ENCODE measurements at regions of chr5 and their contacts with region 1.

Region 1: GRCh38 chr5:150458819-150459557 is 9.4 kb upstream of the RPS14 start:
- DNase-seq: peak; percentile 90
- ATAC-seq: peak; percentile 94
- H3K4me3 Mint-ChIP-seq: peak overlapping the region; percentile 58
- H3K27ac Mint-ChIP-seq: peak overlapping the region; percentile 50
- H3K4me1 Mint-ChIP-seq: peaks cover 44% of the 10 kb centered on the region
- H3K27me3 Mint-ChIP-seq: no peaks in the 10 kb centered on the region
- CTCF ChIP-seq: no peak

Region 2: DNA sequence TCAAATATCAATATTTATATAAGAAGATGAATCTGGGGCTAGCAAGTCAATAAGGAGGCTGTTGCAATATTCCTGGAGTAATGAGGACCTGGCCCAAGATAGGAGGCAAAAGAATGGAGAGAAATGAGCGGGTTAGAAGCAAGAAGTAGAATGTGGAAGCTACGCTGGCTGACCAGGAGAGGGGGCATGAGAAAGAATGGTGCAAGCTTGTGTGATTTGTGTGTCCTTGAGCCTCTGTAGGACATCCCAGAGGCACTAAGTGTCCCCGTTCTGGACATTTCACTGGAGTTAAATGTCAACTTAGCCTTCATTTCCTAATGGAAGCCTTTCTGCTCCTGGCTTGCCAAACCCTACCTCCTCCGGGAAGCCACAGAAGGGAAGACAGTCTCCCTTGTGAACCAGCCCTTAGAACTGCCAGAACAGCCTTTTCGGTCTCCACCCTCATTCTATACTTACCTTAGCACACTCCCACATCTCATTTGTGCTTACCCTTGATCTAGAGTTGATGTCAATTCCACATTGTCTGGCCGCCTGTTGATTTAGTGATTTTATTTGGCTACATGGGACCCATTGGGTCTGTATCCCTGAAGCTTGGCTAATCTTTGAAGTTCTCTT is 507.7 kb before region 1 on chr5:
- CTCF ChIA-PET with region 1: no interaction called
- POLR2A ChIA-PET with region 1: no interaction called
- intact Hi-C with region 1: no loop called
- DNase-seq: no peak
- ATAC-seq: no peak
- H3K4me3 Mint-ChIP-seq: no peak overlapping the region
- H3K27ac Mint-ChIP-seq: no peak overlapping the region
- H3K4me1 Mint-ChIP-seq: no peaks in the 10 kb centered on the region
- H3K27me3 Mint-ChIP-seq: peaks cover 7% of the 10 kb centered on the region
- CTCF ChIP-seq: no peak

Region 3: GRCh38 chr5:150498501-150498900 is 39.5 kb after region 1 on chr5:
- CTCF ChIA-PET with region 1: no interaction called
- POLR2A ChIA-PET with region 1: no interaction called
- intact Hi-C with region 1: no loop called
- DNase-seq: no peak
- ATAC-seq: no peak
- H3K4me3 Mint-ChIP-seq: no peak overlapping the region
- H3K27ac Mint-ChIP-seq: no peak overlapping the region
- H3K4me1 Mint-ChIP-seq: peaks cover 14% of the 10 kb centered on the region
- H3K27me3 Mint-ChIP-seq: no peaks in the 10 kb centered on the region
- CTCF ChIP-seq: no peak

Region 4: DNA sequence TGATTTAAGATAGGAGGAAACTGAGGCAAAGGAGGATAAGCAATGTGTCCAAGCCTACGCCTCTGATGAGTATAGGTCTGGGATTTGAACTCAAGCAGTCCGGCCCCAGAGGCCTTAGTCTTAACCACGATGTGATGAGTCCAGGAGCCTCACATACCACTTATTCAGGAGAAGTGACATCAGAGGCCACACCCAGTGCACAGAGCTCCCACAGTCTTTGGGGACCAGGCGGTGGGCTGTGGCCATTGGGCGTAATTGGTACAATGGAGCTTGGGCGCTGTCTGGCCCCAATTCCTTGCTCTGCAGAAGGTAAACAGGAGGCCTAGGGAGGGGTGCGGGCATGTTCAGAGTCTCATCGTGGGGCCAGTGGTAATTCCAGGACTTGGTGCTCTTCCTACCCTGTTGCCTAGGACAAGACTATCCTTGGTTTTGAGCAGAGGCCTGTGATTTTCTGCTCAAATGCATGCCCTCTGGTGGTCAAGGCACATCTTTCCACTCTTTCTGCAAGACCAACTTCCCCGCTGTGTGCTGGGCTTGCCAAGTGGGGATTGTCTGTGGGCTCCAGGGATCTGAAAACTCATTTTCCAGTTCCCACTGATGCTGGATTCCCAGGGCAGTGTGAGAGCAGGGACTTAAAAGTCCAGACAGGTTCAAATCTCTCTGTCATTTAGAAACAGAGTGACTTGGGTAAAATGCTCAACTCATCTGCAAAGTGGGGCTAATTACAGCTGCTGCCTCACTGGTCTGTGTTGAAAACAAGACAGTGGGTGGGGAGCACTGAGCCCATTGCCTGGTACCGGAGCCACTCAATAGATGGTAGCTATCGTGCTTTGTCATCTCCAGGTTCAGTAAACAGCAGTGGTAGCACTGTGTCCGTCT is 64.7 kb after region 1 on chr5:
- CTCF ChIA-PET with region 1: interaction called, 51 read pairs
- POLR2A ChIA-PET with region 1: no interaction called
- intact Hi-C with region 1: loop called (anchors 1 kb)
- DNase-seq: no peak
- ATAC-seq: peak; percentile 65
- H3K4me3 Mint-ChIP-seq: no peak overlapping the region
- H3K27ac Mint-ChIP-seq: no peak overlapping the region
- H3K4me1 Mint-ChIP-seq: no peaks in the 10 kb centered on the region
- H3K27me3 Mint-ChIP-seq: no peaks in the 10 kb centered on the region
- CTCF ChIP-seq: no peak

Region 5: DNA sequence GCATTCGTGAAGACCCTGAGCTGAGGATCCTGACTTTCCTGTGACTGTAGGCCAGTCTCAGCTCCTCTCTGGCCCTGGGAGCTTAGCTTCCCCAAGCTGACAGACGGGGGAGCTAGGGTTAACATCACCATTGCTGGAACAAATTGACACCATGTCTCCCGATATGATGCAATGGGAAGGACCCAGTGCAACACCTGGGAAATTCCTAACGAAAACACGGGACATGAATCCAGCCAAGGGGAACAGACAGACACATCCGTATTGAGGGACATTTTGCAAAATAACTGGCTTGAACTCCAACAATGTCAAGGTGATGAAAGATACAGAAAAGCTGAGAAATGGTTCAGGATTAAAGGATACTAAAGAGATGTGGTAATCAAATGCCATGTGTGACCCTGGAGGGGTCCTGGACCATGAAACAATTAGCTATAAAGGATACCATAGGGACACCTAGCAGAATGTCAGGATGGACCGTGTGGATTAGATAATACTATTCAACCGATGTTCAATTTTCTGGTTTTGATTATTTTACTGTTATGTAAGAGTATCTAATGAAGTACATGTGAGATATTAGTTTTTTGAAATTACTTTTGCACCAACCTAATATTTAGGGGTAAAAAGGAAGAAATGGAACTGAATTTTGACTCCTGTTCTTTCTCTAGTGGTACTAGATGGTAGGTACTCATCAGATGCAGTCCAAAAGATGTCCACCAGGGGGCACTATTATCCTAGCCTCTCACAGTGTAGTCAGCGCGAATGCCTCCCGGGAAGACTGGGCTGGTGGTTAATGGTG is 101.6 kb after region 1 on chr5:
- CTCF ChIA-PET with region 1: interaction called, 14 read pairs
- POLR2A ChIA-PET with region 1: no interaction called
- intact Hi-C with region 1: loop called (anchors 1 kb)
- DNase-seq: peak; percentile 36
- ATAC-seq: peak; percentile 98
- H3K4me3 Mint-ChIP-seq: no peak overlapping the region
- H3K27ac Mint-ChIP-seq: no peak overlapping the region
- H3K4me1 Mint-ChIP-seq: peaks cover 7% of the 10 kb centered on the region
- H3K27me3 Mint-ChIP-seq: no peaks in the 10 kb centered on the region
- CTCF ChIP-seq: peak; percentile 44

Region 6: GRCh38 chr5:150710165-150710564 is 251.2 kb after region 1 on chr5:
- CTCF ChIA-PET with region 1: no interaction called
- POLR2A ChIA-PET with region 1: no interaction called
- intact Hi-C with region 1: loop called (anchors 1 kb)
- DNase-seq: no peak
- ATAC-seq: no peak
- H3K4me3 Mint-ChIP-seq: no peak overlapping the region
- H3K27ac Mint-ChIP-seq: no peak overlapping the region
- H3K4me1 Mint-ChIP-seq: no peaks in the 10 kb centered on the region
- H3K27me3 Mint-ChIP-seq: no peaks in the 10 kb centered on the region
- CTCF ChIP-seq: no peak

Measured in activated B cell treated with CpG ODN at 0.5 μM for 24 hours (primary cell).